ENCODE measurements at regions of chr4 and their contacts with region 1.

Region 1: GRCh38 chr4:83639849-83640493 is 104.1 kb downstream of the GPAT3 start:
- DNase-seq: peak; percentile 45 to 64 (median 60)
- H3K4me3 ChIP-seq: no peak overlapping the region
- H3K4me3 Mint-ChIP-seq: no peak overlapping the region
- H3K27ac ChIP-seq: no peak overlapping the region
- H3K27ac Mint-ChIP-seq: no peak overlapping the region
- H3K4me1 ChIP-seq: no peaks in the 10 kb centered on the region
- H3K4me1 Mint-ChIP-seq: peaks cover 0 to 3% (median 2%) of the 10 kb centered on the region in 4 donors
- H3K27me3 ChIP-seq: no peaks in the 10 kb centered on the region
- H3K27me3 Mint-ChIP-seq: peaks cover 6 to 8% of the 10 kb centered on the region in 2 donors

Region 2: DNA sequence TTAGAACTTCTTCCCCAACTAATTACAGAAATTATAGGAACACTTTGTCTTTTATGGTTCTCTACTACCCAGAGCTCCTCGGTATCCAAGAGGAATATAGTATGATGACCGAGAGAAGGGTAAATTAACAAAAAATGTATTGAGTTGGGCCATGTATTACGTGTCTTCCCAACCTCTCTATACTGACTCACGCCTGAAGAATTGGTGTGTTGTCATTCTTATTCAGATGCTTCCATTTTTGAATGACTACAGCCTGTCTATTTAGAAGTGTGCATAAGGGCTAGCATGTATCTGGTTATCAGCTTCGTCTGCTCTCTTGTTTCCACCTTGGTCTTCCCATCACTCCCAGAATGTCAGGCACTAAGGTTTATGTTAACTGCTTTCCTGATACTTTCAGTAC is 816.9 kb before region 1 on chr4:
- CTCF ChIA-PET with region 1: no interaction called
- POLR2A ChIA-PET with region 1: no interaction called
- intact Hi-C with region 1: no loop called
- DNase-seq: no peak
- H3K4me3 ChIP-seq: no peak overlapping the region
- H3K4me3 Mint-ChIP-seq: no peak overlapping the region
- H3K27ac ChIP-seq: no peak overlapping the region
- H3K27ac Mint-ChIP-seq: peak overlapping the region in 2 of 7 donors; percentile 1 to 48
- H3K4me1 ChIP-seq: no peaks in the 10 kb centered on the region
- H3K4me1 Mint-ChIP-seq: no peaks in the 10 kb centered on the region
- H3K27me3 ChIP-seq: no peaks in the 10 kb centered on the region
- H3K27me3 Mint-ChIP-seq: no peaks in the 10 kb centered on the region

Region 3: DNA sequence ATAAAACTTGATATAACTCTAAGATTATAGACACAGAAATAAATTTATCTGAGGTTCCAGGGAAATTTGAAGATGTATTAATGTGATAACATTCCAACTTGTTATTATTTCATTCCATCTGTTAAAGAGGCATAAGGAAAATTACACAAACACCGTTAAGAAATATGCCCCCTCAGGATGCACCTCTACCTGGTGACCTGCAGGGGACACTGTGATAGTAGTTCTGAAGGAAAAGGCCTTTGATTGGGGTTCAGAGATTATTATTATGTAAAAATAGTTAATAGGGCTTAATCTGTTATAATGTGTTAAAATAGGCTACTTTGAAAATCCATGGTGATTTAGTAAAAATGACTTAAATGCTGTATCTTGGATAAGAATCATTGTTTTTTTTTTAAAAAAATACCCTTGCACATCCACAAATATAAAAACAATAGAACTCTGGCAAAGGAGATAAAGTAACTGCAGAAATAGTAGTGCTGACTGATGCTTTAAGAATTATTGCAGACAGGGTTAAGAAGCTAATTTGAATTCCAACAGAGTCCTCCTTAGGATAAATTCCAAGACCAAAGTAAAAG is 149.0 kb before region 1 on chr4:
- CTCF ChIA-PET with region 1: interaction called, 96 read pairs
- POLR2A ChIA-PET with region 1: interaction called, 3 read pairs
- intact Hi-C with region 1: loop called (anchors 1 kb)
- DNase-seq: peak in 4 of 5 donors; percentile 29 to 46 (median 35)
- H3K4me3 ChIP-seq: no peak overlapping the region
- H3K4me3 Mint-ChIP-seq: no peak overlapping the region
- H3K27ac ChIP-seq: no peak overlapping the region
- H3K27ac Mint-ChIP-seq: no peak overlapping the region
- H3K4me1 ChIP-seq: no peaks in the 10 kb centered on the region
- H3K4me1 Mint-ChIP-seq: peaks cover 3 to 7% (median 4%) of the 10 kb centered on the region in 4 donors
- H3K27me3 ChIP-seq: no peaks in the 10 kb centered on the region
- H3K27me3 Mint-ChIP-seq: no peaks in the 10 kb centered on the region

Region 4: GRCh38 chr4:83503974-83504373 is 136.0 kb before region 1 on chr4:
- CTCF ChIA-PET with region 1: interaction called, 93 read pairs
- POLR2A ChIA-PET with region 1: interaction called, 4 read pairs
- intact Hi-C with region 1: loop called (anchors 1 kb)
- DNase-seq: peak in 4 of 5 donors; percentile 24 to 48 (median 34)
- H3K4me3 ChIP-seq: no peak overlapping the region
- H3K4me3 Mint-ChIP-seq: peak overlapping the region in 5 of 8 donors; percentile 0 to 74 (median 54)
- H3K27ac ChIP-seq: no peak overlapping the region
- H3K27ac Mint-ChIP-seq: peak overlapping the region; percentile 49 to 94 (median 87)
- H3K4me1 ChIP-seq: peaks cover 18% of the 10 kb centered on the region
- H3K4me1 Mint-ChIP-seq: peaks cover 11 to 21% (median 16%) of the 10 kb centered on the region in 4 donors
- H3K27me3 ChIP-seq: no peaks in the 10 kb centered on the region
- H3K27me3 Mint-ChIP-seq: peaks cover 1 to 2% of the 10 kb centered on the region in 2 donors

Region 5: GRCh38 chr4:83651502-83652245 is 11.7 kb after region 1 on chr4:
- CTCF ChIA-PET with region 1: interaction called, 14 read pairs
- POLR2A ChIA-PET with region 1: no interaction called
- intact Hi-C with region 1: no loop called
- DNase-seq: no peak
- H3K4me3 ChIP-seq: no peak overlapping the region
- H3K4me3 Mint-ChIP-seq: no peak overlapping the region
- H3K27ac ChIP-seq: no peak overlapping the region
- H3K27ac Mint-ChIP-seq: no peak overlapping the region
- H3K4me1 ChIP-seq: no peaks in the 10 kb centered on the region
- H3K4me1 Mint-ChIP-seq: no peaks in the 10 kb centered on the region
- H3K27me3 ChIP-seq: no peaks in the 10 kb centered on the region
- H3K27me3 Mint-ChIP-seq: peaks cover 0 to 3% of the 10 kb centered on the region in 2 donors

Measured in CD4-positive, alpha-beta memory T cell (primary cell).